Endothelial cell of umbilical vein (primary cell): ENCODE measurements at regions of chr20 and their contacts with region 1.

Region 1: GRCh38 chr20:33862709-33863403 is 51.7 kb downstream of the CHMP4B start:
- DNase-seq: peak; percentile 65
- H3K4me3 ChIP-seq: peak overlapping the region in 1 of 3 experiments; percentile 7
- H3K27ac ChIP-seq: no peak overlapping the region
- H3K4me1 ChIP-seq: peaks cover 23% of the 10 kb centered on the region
- H3K27me3 ChIP-seq: peaks cover 0 to 4% of the 10 kb centered on the region in 2 experiments
- CTCF ChIP-seq: peak; percentile 74 to 89
- POLR2A ChIP-seq: no peak

Region 2: DNA sequence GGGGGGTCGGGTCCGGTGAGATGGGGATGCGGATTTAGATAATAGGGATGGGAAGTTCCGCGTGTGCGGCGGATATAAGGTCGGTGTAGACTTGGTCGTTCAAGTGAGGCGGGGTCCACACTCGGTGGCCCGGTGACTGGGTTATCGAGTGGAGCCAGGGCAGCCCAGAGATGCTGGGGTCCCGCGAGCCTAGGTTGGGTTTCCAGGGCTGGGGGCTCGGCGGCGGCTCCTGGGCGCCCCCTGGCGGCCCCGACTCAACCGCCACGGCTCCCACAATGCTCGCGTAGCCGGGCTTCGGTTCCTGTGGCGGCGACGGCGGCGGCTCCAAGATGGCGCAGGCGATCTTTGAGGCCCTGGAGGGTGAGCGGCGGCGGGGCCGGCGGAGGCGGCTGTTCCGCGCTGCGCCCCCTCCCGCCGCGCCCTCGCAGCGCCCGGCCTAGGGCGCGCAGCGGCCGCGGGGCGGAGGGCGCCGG is 131.1 kb before region 1 on chr20 and contains the start of gene ZNF341:
- CTCF ChIA-PET with region 1: interaction called, 5 read pairs
- POLR2A ChIA-PET with region 1: no interaction called
- dilution Hi-C with region 1: no loop called
- intact Hi-C with region 1: loop called (anchors 5 kb)
- DNase-seq: peak; percentile 74
- H3K4me3 ChIP-seq: peak within 1 kb of the TSS; percentile 17 to 59 (median 51)
- H3K27ac ChIP-seq: peak within 1 kb of the TSS; percentile 53
- H3K4me1 ChIP-seq: peaks cover 22% of the 10 kb centered on the region
- H3K27me3 ChIP-seq: no peaks in the 10 kb centered on the region
- CTCF ChIP-seq: peak; percentile 89 to 96
- POLR2A ChIP-seq: peak; percentile 22
- total RNA-seq, gene ZNF341: 3.9 and 4.9 TPM in 2 replicates

Region 3: GRCh38 chr20:33810885-33811777 is 51.7 kb before region 1 on chr20 and contains the start of gene CHMP4B:
- CTCF ChIA-PET with region 1: interaction called, 12 read pairs
- POLR2A ChIA-PET with region 1: interaction called, 5 read pairs
- dilution Hi-C with region 1: no loop called
- intact Hi-C with region 1: loop called (anchors 1 kb)
- DNase-seq: peak; percentile 98
- H3K4me3 ChIP-seq: peak within 1 kb of the TSS; percentile 60 to 86 (median 83)
- H3K27ac ChIP-seq: peak within 1 kb of the TSS; percentile 96
- H3K4me1 ChIP-seq: peaks cover 23% of the 10 kb centered on the region
- H3K27me3 ChIP-seq: no peaks in the 10 kb centered on the region
- CTCF ChIP-seq: no peak
- POLR2A ChIP-seq: peak; percentile 69
- total RNA-seq, gene CHMP4B: 105 and 112 TPM in 2 replicates

Region 4: DNA sequence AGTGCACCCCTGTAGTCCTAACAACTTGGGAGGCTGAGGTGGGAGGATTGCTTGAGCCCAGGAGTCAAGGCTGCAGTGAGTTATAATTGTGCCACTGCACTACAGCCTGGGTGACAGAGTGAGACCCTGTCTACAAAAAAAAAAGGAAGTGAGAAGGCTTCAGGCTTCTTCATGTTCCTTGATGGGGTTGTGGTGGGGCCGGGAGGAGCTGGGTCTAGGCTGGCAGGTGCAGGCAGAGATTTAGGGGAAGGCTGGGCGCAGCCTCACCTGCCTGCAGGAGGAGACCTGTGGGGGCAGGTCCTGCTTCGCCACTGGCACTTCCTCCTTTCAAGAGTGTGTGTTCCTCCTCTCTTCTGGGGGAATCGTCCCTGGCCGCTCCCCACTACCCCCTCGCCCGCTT is 12.2 kb after region 1 on chr20:
- CTCF ChIA-PET with region 1: interaction called, 17 read pairs
- POLR2A ChIA-PET with region 1: no interaction called
- dilution Hi-C with region 1: no loop called
- intact Hi-C with region 1: no loop called
- DNase-seq: no peak
- H3K4me3 ChIP-seq: no peak overlapping the region
- H3K27ac ChIP-seq: no peak overlapping the region
- H3K4me1 ChIP-seq: no peaks in the 10 kb centered on the region
- H3K27me3 ChIP-seq: peaks cover 0 to 2% of the 10 kb centered on the region in 2 experiments
- CTCF ChIP-seq: no peak
- POLR2A ChIP-seq: no peak

Region 5: GRCh38 chr20:33992923-33993575 is 130.2 kb after region 1 on chr20:
- CTCF ChIA-PET with region 1: interaction called, 13 read pairs
- POLR2A ChIA-PET with region 1: interaction called, 5 read pairs
- dilution Hi-C with region 1: no loop called
- intact Hi-C with region 1: loop called (anchors 5 kb)
- DNase-seq: peak; percentile 100
- H3K4me3 ChIP-seq: peak overlapping the region; percentile 92 to 99 (median 96)
- H3K27ac ChIP-seq: peak overlapping the region; percentile 86
- H3K4me1 ChIP-seq: peaks cover 19% of the 10 kb centered on the region
- H3K27me3 ChIP-seq: no peaks in the 10 kb centered on the region
- CTCF ChIP-seq: no peak
- POLR2A ChIP-seq: peak; percentile 96

Region 6: GRCh38 chr20:34069341-34070078 is 206.7 kb after region 1 on chr20:
- CTCF ChIA-PET with region 1: interaction called, 158 read pairs
- POLR2A ChIA-PET with region 1: no interaction called
- dilution Hi-C with region 1: no loop called
- intact Hi-C with region 1: loop called (anchors 1 kb)
- DNase-seq: peak; percentile 90
- H3K4me3 ChIP-seq: no peak overlapping the region
- H3K27ac ChIP-seq: no peak overlapping the region
- H3K4me1 ChIP-seq: no peaks in the 10 kb centered on the region
- H3K27me3 ChIP-seq: no peaks in the 10 kb centered on the region
- CTCF ChIP-seq: peak; percentile 64 to 93
- POLR2A ChIP-seq: no peak

Region 7: GRCh38 chr20:34111702-34112599 is 249.1 kb after region 1 on chr20 and contains the start of gene EIF2S2:
- CTCF ChIA-PET with region 1: interaction called, 10 read pairs
- POLR2A ChIA-PET with region 1: interaction called, 3 read pairs
- dilution Hi-C with region 1: no loop called
- intact Hi-C with region 1: no loop called
- DNase-seq: peak; percentile 99
- H3K4me3 ChIP-seq: peak within 1 kb of the TSS; percentile 69 to 95 (median 93)
- H3K27ac ChIP-seq: peak within 1 kb of the TSS; percentile 78
- H3K4me1 ChIP-seq: peaks cover 27% of the 10 kb centered on the region
- H3K27me3 ChIP-seq: no peaks in the 10 kb centered on the region
- CTCF ChIP-seq: no peak
- POLR2A ChIP-seq: peak; percentile 97
- total RNA-seq, gene EIF2S2: 99.3 and 102 TPM in 2 replicates